PC-3 (cell line): ENCODE measurements at regions of chr6 and their contacts with region 1.

Region 1: DNA sequence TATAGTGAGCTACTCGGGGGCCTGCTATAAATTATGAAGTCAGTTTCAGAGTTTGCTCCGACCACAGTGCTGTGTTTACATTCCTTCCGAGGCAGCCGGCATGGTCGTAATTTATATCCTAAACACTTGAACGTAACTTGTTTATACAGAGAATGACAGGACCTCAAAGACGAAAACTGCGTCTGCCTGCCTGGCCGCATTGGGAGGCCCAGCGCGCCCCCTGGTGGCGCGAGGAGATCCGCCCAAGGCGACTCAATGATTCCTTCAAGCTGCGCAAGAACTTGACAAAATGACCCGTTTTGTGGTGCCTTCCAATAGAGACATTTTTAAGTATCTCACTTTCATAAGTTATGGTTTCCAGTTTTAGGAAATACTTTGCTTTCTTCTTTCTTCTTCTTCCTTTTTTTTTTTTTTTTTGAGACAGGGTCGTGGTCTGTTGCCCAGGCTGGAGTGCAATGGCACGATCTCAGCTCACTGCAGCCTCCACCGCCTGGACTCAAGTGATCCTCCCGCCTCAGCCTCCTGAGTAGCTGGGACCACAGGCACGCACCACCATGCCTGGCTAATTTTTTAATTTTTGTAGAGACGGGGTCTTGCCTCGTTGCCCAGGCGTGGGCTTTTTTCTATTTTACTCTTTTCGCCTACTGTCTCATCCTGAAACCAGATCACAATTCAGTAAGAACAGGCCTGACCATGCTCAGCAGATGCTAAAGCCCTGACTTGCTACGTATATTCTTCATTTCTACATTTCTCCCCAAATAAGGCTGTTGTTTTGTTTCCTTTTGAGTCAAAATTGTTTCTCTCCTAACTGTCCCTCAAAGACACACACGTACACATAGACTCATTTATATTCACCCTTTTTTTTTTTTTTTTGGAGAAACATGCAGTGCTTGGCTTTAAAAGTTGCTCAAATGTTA is 7.8 kb downstream of the FOXF2 start:
- DNase-seq: peak; percentile 86
- ATAC-seq: peak; percentile 93
- H3K4me3 ChIP-seq: no peak overlapping the region
- H3K27ac ChIP-seq: no peak overlapping the region
- H3K4me1 ChIP-seq: no peaks in the 10 kb centered on the region
- H3K27me3 ChIP-seq: peaks cover 86% of the 10 kb centered on the region
- CTCF ChIP-seq: peak; percentile 96

Region 2: DNA sequence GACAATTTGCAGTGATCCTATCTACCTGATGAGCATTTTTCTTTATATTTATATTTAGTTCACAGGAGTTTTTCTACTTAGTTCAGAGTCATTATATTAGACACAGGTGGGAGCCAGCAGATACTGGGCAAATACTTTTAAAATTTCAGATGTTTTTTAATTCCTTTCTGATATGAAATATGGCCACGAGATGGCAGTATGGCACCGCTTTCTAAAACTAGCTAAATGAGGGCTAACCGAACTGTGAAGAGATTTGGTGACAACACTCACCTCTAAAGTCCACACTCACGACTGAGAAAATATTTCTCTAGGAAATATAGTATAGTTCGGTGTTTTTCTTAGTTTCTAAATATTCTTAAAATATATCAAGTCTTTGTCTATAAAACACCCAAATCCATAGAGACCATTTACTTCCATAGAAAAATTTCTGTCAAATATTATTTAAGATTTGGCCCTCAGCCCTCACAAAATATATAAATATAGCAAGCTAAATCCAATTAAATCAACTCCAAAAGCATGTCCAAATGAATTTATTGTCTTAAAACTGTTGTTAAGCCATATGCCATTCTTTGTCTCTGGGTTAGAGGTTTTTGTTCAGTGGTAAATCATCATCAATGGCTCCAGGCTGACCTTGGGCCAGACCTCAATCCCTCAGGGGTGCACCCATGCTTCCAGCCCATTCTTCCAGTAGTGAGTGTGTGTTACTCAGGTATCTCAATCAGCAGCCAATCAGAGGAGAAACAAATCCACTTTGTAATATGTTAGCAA is 803.9 kb before region 1 on chr6:
- CTCF ChIA-PET with region 1: no interaction called
- POLR2A ChIA-PET with region 1: no interaction called
- intact Hi-C with region 1: loop called (anchors 5 kb)
- DNase-seq: peak; percentile 82
- ATAC-seq: peak; percentile 75
- H3K4me3 ChIP-seq: no peak overlapping the region
- H3K27ac ChIP-seq: no peak overlapping the region
- H3K4me1 ChIP-seq: no peaks in the 10 kb centered on the region
- H3K27me3 ChIP-seq: no peaks in the 10 kb centered on the region
- CTCF ChIP-seq: peak; percentile 74

Region 3: GRCh38 chr6:797479-798077 is 599.6 kb before region 1 on chr6:
- CTCF ChIA-PET with region 1: no interaction called
- POLR2A ChIA-PET with region 1: no interaction called
- intact Hi-C with region 1: loop called (anchors 1 kb)
- DNase-seq: peak; percentile 66
- ATAC-seq: peak; percentile 70
- H3K4me3 ChIP-seq: no peak overlapping the region
- H3K27ac ChIP-seq: no peak overlapping the region
- H3K4me1 ChIP-seq: no peaks in the 10 kb centered on the region
- H3K27me3 ChIP-seq: peaks cover 87% of the 10 kb centered on the region
- CTCF ChIP-seq: peak; percentile 85

Region 4: GRCh38 chr6:912871-913835 is 484.1 kb before region 1 on chr6:
- CTCF ChIA-PET with region 1: no interaction called
- POLR2A ChIA-PET with region 1: no interaction called
- intact Hi-C with region 1: loop called (anchors 5 kb)
- DNase-seq: peak; percentile 44
- ATAC-seq: peak; percentile 64
- H3K4me3 ChIP-seq: no peak overlapping the region
- H3K27ac ChIP-seq: no peak overlapping the region
- H3K4me1 ChIP-seq: no peaks in the 10 kb centered on the region
- H3K27me3 ChIP-seq: peaks cover 69% of the 10 kb centered on the region
- CTCF ChIP-seq: peak; percentile 44

Region 5: GRCh38 chr6:1153696-1154245 is 243.4 kb before region 1 on chr6:
- CTCF ChIA-PET with region 1: no interaction called
- POLR2A ChIA-PET with region 1: no interaction called
- intact Hi-C with region 1: no loop called
- DNase-seq: no peak
- ATAC-seq: no peak
- H3K4me3 ChIP-seq: no peak overlapping the region
- H3K27ac ChIP-seq: no peak overlapping the region
- H3K4me1 ChIP-seq: no peaks in the 10 kb centered on the region
- H3K27me3 ChIP-seq: peaks cover 57% of the 10 kb centered on the region
- CTCF ChIP-seq: no peak

Region 6: DNA sequence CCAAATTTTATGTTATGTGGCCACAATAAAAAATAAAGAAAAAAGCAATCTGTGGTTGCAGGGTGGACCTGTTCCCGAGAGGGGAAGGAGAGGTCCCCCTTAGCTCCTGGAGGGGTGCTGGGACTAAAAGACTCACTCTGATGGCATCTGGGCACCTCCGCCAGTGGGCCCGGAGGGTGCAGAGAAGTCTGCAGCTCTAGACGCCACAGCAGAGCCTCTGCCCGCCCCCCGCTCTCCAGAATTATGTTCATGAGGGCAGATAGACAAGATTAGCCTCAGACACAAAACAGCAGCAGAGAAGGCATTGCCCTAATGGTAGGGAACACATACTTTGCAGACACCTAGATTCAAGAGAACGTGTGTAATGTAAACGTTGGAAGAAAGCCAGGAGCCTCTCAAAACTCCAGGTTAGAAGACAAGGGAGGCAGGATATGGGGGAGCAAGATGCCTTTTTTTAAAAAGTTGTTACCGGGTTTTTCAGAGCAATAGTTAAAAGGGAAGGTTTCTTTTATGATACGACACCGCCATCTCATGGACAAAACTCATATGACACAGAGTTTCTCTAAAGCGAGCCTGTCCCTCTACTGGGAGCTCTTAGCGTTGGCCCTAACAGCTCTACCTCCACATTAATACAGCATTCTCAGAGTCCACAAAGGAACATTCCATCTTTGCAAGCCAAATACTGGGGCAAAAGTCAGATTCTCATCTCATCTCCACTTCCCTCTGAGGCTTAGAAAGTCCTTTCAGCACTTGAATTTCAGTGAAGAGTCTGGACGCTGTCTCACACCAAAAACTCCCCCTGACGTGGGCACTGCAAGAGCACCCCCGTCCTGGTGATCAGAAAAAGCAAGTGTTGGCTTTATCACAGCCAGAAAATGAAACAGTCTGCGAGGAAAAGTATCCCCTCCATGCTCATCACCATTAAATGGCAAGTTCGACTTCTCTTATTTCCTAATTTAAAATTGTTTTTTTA is 39.4 kb after region 1 on chr6:
- CTCF ChIA-PET with region 1: interaction called, 10 read pairs
- POLR2A ChIA-PET with region 1: interaction called, 4 read pairs
- intact Hi-C with region 1: no loop called
- DNase-seq: peak; percentile 92
- ATAC-seq: peak; percentile 93
- H3K4me3 ChIP-seq: no peak overlapping the region; the same call in 1 of the 2 replicates
- H3K27ac ChIP-seq: no peak overlapping the region
- H3K4me1 ChIP-seq: peaks cover 4% of the 10 kb centered on the region; the same call in 1 of the 2 replicates
- H3K27me3 ChIP-seq: peaks cover 19% of the 10 kb centered on the region
- CTCF ChIP-seq: peak; percentile 88